Activated CD4-positive, alpha-beta memory T cell treated with anti-CD3 and anti-CD28 coated beads for 36 hours (primary cell): ENCODE measurements at regions of chr13 and their contacts with region 1.

Region 1: DNA sequence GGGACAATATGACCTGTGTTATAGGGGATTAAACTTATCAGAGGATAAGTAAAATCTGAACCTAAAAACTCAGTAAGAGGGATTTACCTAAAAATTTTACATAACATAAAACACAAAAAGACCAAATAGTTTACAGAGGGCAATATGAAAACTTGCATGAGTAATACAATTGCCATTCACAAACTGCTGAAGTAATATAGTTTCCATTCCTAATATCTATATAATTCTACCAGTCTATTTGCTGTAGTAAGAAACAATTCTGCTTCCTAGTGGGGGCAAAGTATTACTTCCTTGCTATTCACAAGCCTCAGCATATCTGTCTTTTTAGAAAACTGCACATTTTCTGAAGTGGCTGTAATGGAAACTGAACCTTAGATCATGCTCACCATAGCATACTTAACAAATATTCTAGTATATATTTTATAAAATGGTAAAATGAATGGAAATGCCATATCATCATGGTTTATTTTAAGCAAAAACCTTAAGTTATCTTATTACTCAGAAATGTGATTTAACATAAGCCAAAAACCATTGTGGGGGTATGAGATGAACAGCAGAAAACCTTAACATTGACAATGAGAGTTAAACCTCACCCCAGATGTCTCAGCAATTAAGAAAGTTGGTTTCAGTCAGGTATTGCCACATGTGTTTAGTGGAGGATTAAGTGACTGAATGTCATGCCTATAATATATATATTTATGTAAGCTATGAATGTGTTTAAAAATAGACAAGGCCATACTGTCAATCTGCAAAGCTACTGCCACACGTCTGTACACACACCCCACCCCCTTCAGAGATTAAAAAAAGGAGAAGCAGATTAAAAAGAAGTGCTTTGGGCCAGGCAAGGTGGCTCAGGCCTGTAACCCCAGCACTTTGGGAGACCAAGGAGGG is 136.8 kb downstream of the MIPEP start:
- DNase-seq: no peak
- H3K4me3 Mint-ChIP-seq: no peak overlapping the region
- H3K27ac Mint-ChIP-seq: no peak overlapping the region
- H3K4me1 Mint-ChIP-seq: peaks cover 45% of the 10 kb centered on the region
- H3K27me3 Mint-ChIP-seq: no peaks in the 10 kb centered on the region

Region 2: DNA sequence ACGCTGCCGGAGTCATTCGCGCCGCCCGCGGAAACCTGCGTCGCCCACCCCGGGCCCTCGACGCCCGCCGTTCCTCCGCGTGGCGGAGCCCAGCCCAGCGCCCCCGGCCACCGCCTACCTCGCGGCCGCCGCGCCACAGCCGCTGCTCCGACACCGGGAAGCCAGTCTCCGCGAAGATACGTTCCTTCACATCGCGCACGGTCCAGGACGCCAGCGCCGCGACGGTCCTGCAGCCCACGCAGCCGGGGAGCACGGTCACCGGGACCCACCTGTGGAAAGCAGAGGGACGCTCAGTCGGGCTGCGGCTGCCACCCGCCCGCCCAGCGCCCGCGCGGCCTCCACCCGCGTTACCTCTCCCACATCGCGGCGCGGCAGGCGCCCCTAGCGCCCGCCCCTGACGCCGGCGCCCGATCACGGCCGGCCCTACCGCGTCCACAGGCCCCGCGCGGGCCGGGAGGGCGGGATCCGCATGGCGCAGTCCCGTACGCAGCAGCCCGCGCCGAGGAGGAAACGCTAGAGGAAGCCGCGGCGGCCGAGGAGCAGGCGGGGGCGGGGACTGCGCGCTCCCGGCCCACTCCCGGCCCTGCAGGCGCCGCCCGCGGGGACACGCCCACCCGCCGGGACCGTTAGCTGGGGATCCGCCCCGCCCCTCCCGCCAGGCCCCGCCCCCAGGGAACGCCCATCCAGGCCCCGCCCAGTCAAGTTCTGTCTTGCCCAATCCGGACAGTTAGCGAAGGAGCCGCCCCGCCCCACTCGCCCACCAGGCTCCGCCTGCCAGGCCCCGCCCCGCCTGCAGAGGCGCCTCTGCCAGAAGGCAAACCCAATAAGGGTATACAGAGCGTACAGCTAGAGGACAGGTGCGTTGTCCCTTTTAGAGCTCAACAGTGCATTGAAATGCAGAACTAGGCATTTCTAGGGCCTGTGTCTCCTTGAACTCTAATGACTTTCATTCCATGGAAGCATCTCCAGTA is 377.1 kb before region 1 on chr13:
- CTCF ChIA-PET with region 1: no interaction called
- POLR2A ChIA-PET with region 1: no interaction called
- intact Hi-C with region 1: loop called (anchors 5 kb)
- DNase-seq: peak; percentile 98
- H3K4me3 Mint-ChIP-seq: peak overlapping the region; percentile 73
- H3K27ac Mint-ChIP-seq: no peak overlapping the region
- H3K4me1 Mint-ChIP-seq: peaks cover 69% of the 10 kb centered on the region
- H3K27me3 Mint-ChIP-seq: no peaks in the 10 kb centered on the region

Region 3: DNA sequence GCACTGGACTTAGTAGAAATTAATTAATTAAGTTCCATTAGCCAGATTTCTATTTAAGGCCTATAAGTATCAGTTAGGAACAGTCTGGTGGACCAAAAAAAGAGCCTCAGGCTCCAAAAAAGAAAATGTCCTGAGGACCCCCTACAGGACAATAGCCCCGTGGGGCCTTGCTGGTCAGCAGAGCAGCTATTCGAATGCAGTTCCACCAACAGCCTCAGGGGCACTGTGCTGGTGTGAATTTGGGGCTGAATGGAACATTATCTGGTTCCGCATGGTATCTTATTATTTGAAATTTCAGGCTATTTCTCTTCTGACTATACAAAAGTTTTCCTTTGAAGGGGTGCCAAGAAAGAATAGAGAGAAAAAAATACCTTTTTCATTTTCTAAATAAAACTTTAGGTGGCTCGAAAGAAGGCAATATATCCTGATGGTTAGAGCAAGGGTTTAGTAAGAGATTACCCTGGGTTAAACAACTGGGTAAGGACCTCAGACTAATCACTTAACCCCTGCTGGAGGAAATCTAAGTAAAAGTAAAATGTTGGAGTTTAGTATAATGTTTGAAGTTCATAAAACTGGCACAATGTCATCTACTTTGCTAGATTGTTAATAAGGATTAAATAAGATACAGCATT is 10.4 kb before region 1 on chr13:
- CTCF ChIA-PET with region 1: interaction called, 6 read pairs
- POLR2A ChIA-PET with region 1: interaction called, 4 read pairs
- intact Hi-C with region 1: loop called (anchors 1 kb)
- DNase-seq: no peak
- H3K4me3 Mint-ChIP-seq: no peak overlapping the region
- H3K27ac Mint-ChIP-seq: no peak overlapping the region
- H3K4me1 Mint-ChIP-seq: peaks cover 25% of the 10 kb centered on the region
- H3K27me3 Mint-ChIP-seq: peaks cover 3% of the 10 kb centered on the region

Region 4: GRCh38 chr13:23763318-23763717 is 11.0 kb after region 1 on chr13:
- CTCF ChIA-PET with region 1: no interaction called
- POLR2A ChIA-PET with region 1: no interaction called
- intact Hi-C with region 1: no loop called
- DNase-seq: no peak
- H3K4me3 Mint-ChIP-seq: no peak overlapping the region
- H3K27ac Mint-ChIP-seq: no peak overlapping the region
- H3K4me1 Mint-ChIP-seq: no peaks in the 10 kb centered on the region
- H3K27me3 Mint-ChIP-seq: no peaks in the 10 kb centered on the region

Region 5: DNA sequence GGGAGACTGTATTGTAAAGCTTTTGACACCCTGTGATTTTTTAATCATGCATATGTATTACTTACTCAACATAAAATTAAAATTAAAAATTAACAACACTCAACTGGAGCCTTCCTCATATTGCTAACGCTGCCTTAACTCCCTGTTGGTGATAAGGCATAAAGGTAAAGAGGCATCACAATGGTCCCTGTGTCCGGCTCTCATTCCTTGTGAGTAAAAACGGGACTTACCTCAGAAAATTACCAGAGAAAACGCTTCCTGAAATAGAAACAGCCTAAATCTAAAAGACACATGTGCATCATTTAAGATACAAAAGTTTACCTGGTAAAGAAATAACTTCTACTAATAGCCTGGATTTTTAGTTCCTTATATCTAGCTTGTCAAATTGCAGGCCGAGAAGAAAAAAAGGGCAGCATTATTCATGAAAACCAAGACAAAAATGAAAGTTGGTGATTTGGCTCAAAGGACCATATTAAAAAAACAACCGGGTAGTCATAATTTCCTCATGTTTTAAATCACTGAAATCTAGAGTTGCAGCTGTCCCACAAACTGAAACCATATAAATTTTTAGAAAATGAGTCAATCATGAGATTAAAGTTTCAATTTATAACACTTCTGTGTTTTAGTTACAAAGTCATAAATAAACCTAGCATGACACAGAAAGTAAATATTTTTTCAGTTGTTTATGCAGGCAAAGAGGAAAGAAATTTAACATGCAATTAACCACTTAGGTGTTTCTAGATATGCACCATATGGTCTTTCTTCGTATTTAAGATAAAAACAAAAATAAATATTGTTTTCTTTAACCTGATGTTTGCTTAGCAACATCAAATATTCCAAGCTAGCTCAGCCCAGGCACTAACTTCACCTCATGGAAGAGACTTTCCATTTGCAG is 42.2 kb after region 1 on chr13:
- CTCF ChIA-PET with region 1: interaction called, 3 read pairs
- POLR2A ChIA-PET with region 1: interaction called, 5 read pairs
- intact Hi-C with region 1: loop called (anchors 1 kb)
- DNase-seq: no peak
- H3K4me3 Mint-ChIP-seq: no peak overlapping the region
- H3K27ac Mint-ChIP-seq: no peak overlapping the region
- H3K4me1 Mint-ChIP-seq: peaks cover 29% of the 10 kb centered on the region
- H3K27me3 Mint-ChIP-seq: no peaks in the 10 kb centered on the region

Region 6: DNA sequence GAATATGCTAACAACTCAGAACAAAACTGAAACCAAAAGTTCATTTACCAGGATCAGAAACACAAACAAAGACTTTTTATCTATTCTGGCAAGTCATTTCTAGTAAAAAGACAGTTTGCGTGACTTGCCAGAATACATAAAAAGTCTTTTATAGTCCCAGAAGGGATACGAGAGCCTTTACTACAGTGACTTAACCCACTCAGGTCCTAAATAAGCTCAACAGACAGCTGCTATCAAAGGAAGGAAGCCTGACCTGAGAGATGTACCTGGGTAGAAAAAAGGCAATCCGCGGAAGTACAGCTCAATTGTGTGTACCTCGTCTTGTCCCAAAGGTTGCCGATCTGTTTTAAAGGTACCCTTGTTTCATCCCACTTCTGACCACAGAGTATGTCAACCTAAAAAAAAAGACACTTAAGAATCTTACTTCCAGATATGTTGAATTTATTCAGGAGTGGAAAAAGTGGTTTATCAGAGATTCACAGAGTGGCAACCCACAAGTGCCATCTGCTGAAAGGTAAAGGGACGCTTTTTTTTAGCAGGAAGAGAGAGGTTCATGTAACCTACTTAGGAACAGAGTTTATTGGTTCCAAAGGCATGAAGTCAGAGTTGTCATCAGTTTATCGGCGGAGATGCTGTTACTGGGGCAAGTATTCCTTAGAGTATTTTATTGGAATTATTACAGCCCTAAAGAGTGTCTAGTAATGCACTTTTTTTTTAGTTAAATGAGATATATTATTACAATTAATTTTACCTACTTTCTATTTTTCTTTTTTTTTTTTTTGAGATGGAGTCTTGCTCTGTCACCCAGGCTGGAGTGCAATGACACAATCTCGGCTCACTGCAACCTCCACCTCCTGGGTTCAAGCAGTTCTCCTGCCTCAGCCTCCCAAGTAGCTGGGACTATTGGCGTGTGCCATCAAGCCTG is 214.6 kb after region 1 on chr13:
- CTCF ChIA-PET with region 1: no interaction called
- POLR2A ChIA-PET with region 1: no interaction called
- intact Hi-C with region 1: loop called (anchors 5 kb)
- DNase-seq: peak; percentile 31
- H3K4me3 Mint-ChIP-seq: peak overlapping the region; percentile 51
- H3K27ac Mint-ChIP-seq: peak overlapping the region; percentile 83
- H3K4me1 Mint-ChIP-seq: peaks cover 30% of the 10 kb centered on the region
- H3K27me3 Mint-ChIP-seq: no peaks in the 10 kb centered on the region